Activated CD8-positive, alpha-beta T cell treated with anti-CD3 and anti-CD28 coated beads for 36 hours (primary cell): ENCODE measurements at regions of chr5 and their contacts with region 1.

Region 1: DNA sequence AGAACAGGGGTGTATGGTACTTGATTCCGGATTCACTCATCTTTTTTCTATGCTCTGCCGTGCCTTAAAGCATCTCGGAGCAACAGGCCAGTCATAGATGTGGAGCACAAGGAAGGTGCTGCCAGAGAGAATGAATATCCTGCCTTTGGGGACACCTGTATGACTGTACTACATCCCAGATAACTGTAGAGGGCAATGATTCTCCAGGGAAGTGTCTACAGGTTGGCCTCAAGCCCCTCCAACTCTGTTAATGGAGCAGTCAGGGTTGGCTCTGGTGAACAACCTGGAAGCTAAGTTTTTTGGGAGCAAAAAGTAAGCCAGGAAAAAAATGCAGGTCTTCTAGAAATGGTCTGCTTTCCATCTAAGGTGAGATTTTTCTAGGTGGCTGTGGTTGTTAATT is 71.0 kb downstream of the NREP start:
- DNase-seq: no peak
- ATAC-seq: no peak
- H3K4me3 Mint-ChIP-seq: no peak overlapping the region
- H3K27ac Mint-ChIP-seq: no peak overlapping the region
- H3K4me1 Mint-ChIP-seq: no peaks in the 10 kb centered on the region
- H3K27me3 Mint-ChIP-seq: no peaks in the 10 kb centered on the region
- CTCF ChIP-seq: peak; percentile 29

Region 2: DNA sequence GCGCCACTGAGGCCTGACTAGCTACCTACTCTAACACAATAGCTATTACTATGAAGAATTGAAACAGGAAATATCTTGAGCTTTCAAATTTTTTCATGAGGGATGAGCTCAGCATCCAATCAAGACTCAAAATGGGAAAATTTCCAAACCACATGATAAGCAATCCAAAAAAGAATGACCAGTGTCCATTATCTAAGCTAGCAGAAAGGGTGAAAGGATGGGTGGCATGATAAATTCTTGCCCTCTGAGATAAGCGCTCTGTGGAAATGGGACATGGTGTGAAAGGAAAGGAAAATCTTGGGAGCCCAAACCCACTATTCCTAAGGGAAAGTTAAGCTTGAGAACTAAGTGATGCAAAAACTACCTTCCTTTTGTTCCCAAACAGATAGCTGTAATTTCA is 241.2 kb after region 1 on chr5:
- CTCF ChIA-PET with region 1: no interaction called
- POLR2A ChIA-PET with region 1: no interaction called
- intact Hi-C with region 1: no loop called
- DNase-seq: no peak
- ATAC-seq: no peak
- H3K4me3 Mint-ChIP-seq: no peak overlapping the region
- H3K27ac Mint-ChIP-seq: no peak overlapping the region
- H3K4me1 Mint-ChIP-seq: no peaks in the 10 kb centered on the region
- H3K27me3 Mint-ChIP-seq: no peaks in the 10 kb centered on the region
- CTCF ChIP-seq: no peak

Region 3: GRCh38 chr5:112146323-112147226 is 460.6 kb after region 1 on chr5:
- CTCF ChIA-PET with region 1: interaction called, 4 read pairs
- POLR2A ChIA-PET with region 1: no interaction called
- intact Hi-C with region 1: loop called (anchors 5 kb)
- DNase-seq: peak; percentile 77
- ATAC-seq: peak; percentile 90
- H3K4me3 Mint-ChIP-seq: no peak overlapping the region
- H3K27ac Mint-ChIP-seq: no peak overlapping the region
- H3K4me1 Mint-ChIP-seq: no peaks in the 10 kb centered on the region
- H3K27me3 Mint-ChIP-seq: peaks cover 3% of the 10 kb centered on the region
- CTCF ChIP-seq: peak; percentile 80